CD14-positive monocyte (primary cell): ENCODE measurements at regions of chr5 and their contacts with region 1.

Region 1: DNA sequence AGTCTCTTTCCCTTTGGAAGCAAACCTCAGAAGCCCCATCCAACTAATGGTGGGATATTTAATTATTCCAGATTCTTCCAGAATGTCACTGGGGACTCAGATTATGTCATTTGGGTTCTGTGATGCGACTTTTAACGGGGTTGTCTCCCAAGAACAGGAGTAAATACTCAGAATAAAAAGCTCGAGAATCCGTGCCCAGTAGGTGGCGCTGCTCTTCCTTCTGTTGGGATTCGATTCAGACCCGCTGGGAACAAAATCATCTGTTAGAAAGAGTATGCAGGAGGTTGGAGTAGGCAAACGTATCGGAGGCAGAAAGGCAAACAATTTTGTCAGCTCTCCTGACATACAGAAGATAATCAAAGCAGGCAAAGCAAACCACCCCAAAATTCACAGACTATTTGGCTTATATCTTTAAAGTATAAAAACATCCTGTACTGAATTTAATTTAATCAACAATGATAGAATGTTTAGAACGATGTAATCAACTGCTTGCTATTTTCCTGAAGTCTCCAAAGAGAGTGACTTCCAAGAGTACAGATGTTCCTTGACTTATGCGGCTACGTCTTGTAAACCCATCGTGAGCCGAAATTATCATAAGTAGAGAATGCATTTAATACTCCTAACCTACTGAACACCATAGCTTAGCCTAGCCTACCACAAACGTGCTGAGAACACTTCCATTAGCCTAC is 169.8 kb upstream of the RAI14 start:
- DNase-seq: peak; percentile 53 to 71 (median 71)
- H3K4me3 ChIP-seq: no peak overlapping the region
- H3K4me3 Mint-ChIP-seq: no peak overlapping the region
- H3K27ac ChIP-seq: no peak overlapping the region
- H3K27ac Mint-ChIP-seq: no peak overlapping the region
- H3K4me1 ChIP-seq: no peaks in the 10 kb centered on the region
- H3K4me1 Mint-ChIP-seq: no peaks in the 10 kb centered on the region
- H3K27me3 ChIP-seq: peaks cover 2 to 5% of the 10 kb centered on the region in 2 donors
- H3K27me3 Mint-ChIP-seq: peaks cover 10 to 14% (median 13%) of the 10 kb centered on the region in 3 donors
- CTCF ChIP-seq: peak; percentile 89

Region 2: DNA sequence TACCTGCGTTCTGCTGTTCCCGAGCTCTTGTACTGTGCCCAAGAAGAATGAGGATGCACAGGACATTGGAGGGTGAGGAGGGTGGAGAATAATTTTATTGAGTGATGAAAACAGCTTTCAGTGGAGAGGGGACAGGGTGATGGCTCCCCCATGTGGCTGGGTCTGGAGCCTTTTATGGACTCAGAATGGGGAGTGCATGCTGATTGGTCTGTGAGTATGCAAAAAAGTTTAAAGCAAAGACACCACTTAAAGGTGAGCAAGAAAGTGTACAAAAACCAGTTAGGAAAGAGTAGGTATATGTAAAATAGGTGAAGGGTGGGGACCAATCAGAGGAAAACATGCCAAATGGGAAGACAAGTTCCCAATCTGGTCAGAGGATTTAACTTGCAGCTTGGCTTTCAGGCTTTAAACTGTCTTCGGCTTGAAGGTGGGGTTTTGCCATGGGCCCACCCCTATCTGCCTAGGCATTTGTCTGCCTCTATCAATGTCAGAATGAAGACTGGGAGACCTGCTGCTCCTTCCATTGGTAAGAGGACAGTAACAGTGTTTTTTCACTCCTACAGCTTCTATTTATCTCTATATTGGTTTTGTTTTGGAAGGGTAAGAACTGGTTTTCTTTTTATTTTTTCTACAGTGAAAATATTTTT is 51.8 kb after region 1 on chr5:
- intact Hi-C with region 1: loop called (anchors 2 to 5 kb)
- DNase-seq: peak in 2 of 3 donors; percentile 3 to 17
- H3K4me3 ChIP-seq: no peak overlapping the region
- H3K4me3 Mint-ChIP-seq: no peak overlapping the region
- H3K27ac ChIP-seq: no peak overlapping the region
- H3K27ac Mint-ChIP-seq: no peak overlapping the region
- H3K4me1 ChIP-seq: no peaks in the 10 kb centered on the region
- H3K4me1 Mint-ChIP-seq: no peaks in the 10 kb centered on the region
- H3K27me3 ChIP-seq: peaks cover 0 to 7% of the 10 kb centered on the region in 2 donors
- H3K27me3 Mint-ChIP-seq: peaks cover 2 to 18% (median 4%) of the 10 kb centered on the region in 3 donors
- CTCF ChIP-seq: peak; percentile 27

Region 3: DNA sequence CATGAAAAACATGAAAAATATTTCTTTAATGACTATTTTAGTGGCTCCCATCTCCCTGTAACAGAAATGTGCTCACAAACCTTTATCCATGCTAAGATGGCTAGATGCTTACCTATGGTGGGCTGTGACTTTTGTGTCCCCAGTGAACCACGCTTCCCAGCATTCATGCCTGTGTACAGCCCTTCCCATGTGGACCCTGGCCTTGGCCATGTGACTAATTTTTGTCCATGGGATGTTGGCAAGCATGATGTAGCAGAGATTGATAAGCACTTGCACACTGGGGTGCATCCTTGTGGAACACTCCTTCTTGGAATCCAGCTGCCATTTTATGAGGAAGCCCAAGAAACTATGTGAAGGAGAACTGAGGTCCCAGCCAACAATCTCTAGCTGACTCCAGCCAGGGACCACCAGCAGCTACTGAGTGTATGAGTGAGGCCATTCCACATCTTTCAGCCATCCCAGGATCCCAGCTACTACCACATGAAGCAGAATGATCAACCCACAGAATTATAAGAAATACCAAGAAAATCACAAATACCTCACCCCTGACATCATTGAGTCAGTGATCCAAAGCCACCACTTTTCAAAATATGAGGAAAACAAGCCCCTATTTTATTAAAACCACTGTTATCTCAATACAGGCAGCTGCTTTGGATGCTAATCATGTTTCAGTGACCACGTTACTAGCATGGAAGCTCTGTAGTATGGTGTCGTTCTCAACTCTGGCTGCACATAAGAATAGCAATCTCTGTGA is 153.7 kb after region 1 on chr5:
- intact Hi-C with region 1: no loop called
- DNase-seq: no peak
- H3K4me3 ChIP-seq: no peak overlapping the region
- H3K4me3 Mint-ChIP-seq: no peak overlapping the region
- H3K27ac ChIP-seq: no peak overlapping the region
- H3K27ac Mint-ChIP-seq: no peak overlapping the region
- H3K4me1 ChIP-seq: no peaks in the 10 kb centered on the region
- H3K4me1 Mint-ChIP-seq: no peaks in the 10 kb centered on the region
- H3K27me3 ChIP-seq: no peaks in the 10 kb centered on the region
- H3K27me3 Mint-ChIP-seq: peaks cover 0 to 5% (median 2%) of the 10 kb centered on the region in 3 donors
- CTCF ChIP-seq: no peak

Region 4: GRCh38 chr5:34898258-34898895 is 412.1 kb after region 1 on chr5:
- intact Hi-C with region 1: loop called (anchors 5 kb)
- DNase-seq: peak; percentile 15 to 41 (median 39)
- H3K4me3 ChIP-seq: no peak overlapping the region
- H3K4me3 Mint-ChIP-seq: no peak overlapping the region
- H3K27ac ChIP-seq: no peak overlapping the region
- H3K27ac Mint-ChIP-seq: no peak overlapping the region
- H3K4me1 ChIP-seq: no peaks in the 10 kb centered on the region
- H3K4me1 Mint-ChIP-seq: peaks cover 3% of the 10 kb centered on the region
- H3K27me3 ChIP-seq: no peaks in the 10 kb centered on the region
- H3K27me3 Mint-ChIP-seq: no peaks in the 10 kb centered on the region
- CTCF ChIP-seq: peak; percentile 75